Posterior vena cava (tissue), 2 donors: ENCODE measurements at regions of chr5 and their contacts with region 1.

Region 1: DNA sequence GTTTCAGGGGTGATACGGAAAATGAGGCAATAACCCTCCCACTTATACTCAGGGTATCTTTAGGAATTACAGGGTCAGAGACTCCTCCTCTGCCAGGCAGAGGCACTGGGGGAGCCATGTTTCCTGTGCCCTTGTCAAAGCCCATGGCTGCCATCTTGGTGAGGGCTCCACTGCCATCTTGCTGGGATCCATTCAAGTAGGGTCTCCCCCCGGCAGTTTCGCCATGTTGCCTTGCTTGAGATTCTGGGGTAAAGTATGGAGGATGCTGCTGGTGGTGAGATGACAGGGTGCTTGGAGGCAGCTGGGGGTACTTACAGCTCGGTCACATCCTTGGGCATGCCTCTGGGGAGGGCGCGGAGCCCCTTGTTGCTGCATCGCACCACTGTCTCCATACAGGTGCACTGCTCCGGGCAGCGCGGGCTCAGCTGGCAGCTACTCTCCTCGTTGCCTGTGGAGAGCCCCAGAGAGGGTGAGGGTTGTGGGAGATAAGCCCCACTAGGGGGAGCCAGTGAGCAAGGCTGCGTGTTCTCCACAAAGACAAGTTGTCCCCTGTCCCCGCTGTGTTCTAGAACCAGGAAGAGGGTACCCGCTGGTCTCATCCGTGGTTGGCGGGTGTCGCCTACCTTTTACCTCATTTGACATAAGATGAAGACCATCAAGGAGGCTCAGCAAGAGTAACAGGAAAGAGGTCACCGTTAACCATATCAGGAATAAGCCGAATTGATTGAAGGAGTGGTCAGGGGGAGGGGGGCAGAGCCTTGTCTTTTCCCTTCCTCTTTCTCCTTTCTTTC is 169.0 kb upstream of the PANK3 start:
- DNase-seq: no peak

Region 2: GRCh38 chr5:167754501-167755021 is 993.6 kb before region 1 on chr5:
- intact Hi-C with region 1: loop called in 1 of 2 experiments (anchors 5 kb)
- DNase-seq: no peak